ENCODE measurements at regions of chr17 and their contacts with region 1.

Region 1: GRCh38 chr17:64420143-64420971 is 28.6 kb upstream of the MILR1 start:
- H3K4me3 ChIP-seq: no peak overlapping the region
- H3K27ac ChIP-seq: no peak overlapping the region
- H3K4me1 ChIP-seq: no peaks in the 10 kb centered on the region
- CTCF ChIP-seq: peak; percentile 45; the same call in 1 of the 2 replicates

Region 2: GRCh38 chr17:64306850-64307463 is 113.4 kb before region 1 on chr17:
- CTCF ChIA-PET with region 1: interaction called, 110 read pairs
- POLR2A ChIA-PET with region 1: no interaction called
- H3K4me3 ChIP-seq: no peak overlapping the region
- H3K27ac ChIP-seq: no peak overlapping the region
- H3K4me1 ChIP-seq: no peaks in the 10 kb centered on the region
- CTCF ChIP-seq: no peak

Region 3: GRCh38 chr17:64431534-64431933 is 11.2 kb after region 1 on chr17:
- CTCF ChIA-PET with region 1: interaction called, 31 read pairs
- POLR2A ChIA-PET with region 1: no interaction called
- H3K4me3 ChIP-seq: no peak overlapping the region
- H3K27ac ChIP-seq: no peak overlapping the region
- H3K4me1 ChIP-seq: no peaks in the 10 kb centered on the region
- CTCF ChIP-seq: no peak

Region 4: DNA sequence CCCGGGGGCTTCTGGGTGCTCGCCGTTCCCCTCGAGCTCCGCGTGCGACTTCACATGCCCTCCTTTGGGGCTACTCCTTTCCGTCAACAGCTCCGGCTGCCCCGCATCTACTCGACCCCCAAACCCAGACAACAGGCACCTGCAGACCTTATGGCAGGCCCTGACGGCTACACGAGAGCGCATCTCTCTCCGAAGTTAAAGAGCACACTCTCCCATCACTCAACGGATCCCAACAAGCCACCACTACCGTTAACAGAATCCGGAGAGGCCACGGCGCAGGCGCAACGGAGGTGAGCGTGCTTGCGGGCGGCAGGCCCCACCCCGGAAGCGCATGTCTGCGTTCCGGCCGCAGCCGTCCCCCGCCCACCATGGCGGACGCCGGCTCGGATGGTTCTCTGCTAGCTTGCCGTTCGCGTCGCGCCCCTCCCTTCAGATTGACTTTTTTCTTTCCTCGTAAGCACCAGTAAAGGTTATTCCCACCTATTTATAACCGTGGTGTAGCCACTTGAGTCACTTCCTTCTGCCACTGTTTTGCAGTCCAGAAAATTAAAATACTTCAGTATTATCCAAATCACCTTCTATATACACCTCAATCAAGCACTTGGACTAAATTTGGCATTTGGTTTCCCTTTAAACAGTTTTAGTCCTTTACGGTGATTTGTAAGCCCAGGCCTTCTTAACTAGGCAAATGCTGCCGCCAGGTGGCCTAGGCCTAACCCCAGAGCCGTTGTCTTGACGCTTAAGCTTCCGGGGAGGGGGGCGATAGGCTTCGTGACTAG is 76.6 kb after region 1 on chr17 and contains the start of gene POLG2:
- CTCF ChIA-PET with region 1: interaction called, 75 read pairs
- POLR2A ChIA-PET with region 1: interaction called, 17 read pairs
- H3K4me3 ChIP-seq: peak within 1 kb of the TSS; percentile 75
- H3K27ac ChIP-seq: peak within 1 kb of the TSS; percentile 73
- H3K4me1 ChIP-seq: no peaks in the 10 kb centered on the region
- CTCF ChIP-seq: peak; percentile 62

Region 5: DNA sequence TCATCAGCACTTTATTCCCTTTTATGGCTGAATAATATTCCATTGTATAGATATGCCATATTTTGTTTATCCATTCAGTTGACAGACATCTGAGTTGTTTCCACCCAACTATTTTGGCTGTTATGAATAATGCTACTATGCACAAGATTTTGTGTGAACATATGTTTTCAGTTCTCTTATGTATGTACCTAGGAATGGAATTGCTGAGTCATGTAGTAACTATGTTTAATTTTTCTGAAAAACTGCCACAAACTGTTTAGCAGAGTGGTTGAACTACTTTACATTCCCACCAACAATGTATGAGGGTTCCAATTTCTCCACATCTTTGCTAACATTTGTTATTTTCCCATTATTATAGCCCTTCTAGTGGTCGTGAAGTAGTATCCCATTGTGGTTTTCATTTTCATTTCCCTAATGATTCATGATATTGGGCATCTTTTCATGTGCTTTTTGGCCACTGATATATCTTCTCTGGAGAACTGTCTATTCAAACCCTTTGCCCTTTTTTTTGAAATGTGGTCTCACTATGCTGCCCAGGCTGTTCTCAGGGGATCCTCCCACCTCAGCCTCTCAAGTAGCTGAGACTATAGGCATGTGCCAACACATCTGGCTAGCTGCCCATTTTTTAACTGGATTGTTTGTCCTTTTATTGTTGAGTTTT is 215.4 kb after region 1 on chr17:
- CTCF ChIA-PET with region 1: interaction called, 23 read pairs
- POLR2A ChIA-PET with region 1: no interaction called
- H3K4me3 ChIP-seq: no peak overlapping the region
- H3K27ac ChIP-seq: no peak overlapping the region
- H3K4me1 ChIP-seq: peaks cover 6% of the 10 kb centered on the region
- CTCF ChIP-seq: no peak

Measured in HEK293 (cell line).